Esophagus muscularis mucosa (tissue), 4 donors: ENCODE measurements at regions of chr12 and their contacts with region 1.

Region 1: GRCh38 chr12:104108755-104109445 is 29.1 kb downstream of the NFYB start:
- DNase-seq: peak; percentile 96
- H3K4me3 ChIP-seq: no peak overlapping the region
- H3K27ac ChIP-seq: peak overlapping the region in 1 of 4 donors; percentile 0
- H3K4me1 ChIP-seq: peaks cover 0 to 22% (median 17%) of the 10 kb centered on the region in 4 donors
- H3K27me3 ChIP-seq: no peaks in the 10 kb centered on the region
- CTCF ChIP-seq: peak; percentile 85 to 95 (median 87)
- EP300 ChIP-seq: no peak
- POLR2A ChIP-seq: no peak

Region 2: DNA sequence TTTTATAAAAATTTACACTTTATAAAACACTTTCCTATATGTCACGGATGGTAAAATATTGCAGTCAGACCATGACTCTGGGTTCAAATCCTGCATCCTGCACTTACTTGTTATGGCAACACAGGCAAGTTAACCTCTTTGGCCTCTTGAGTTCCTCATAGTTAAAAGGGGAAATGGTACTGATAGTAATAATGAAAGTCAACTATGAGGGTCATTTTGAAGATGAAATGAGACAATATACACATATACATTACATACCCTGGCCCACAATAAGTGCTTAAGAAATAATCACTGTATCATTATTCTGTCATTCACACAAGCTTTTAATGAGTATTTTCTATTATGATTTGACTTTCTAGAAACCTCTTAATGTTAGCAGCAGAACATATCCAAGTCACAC is 677.5 kb before region 1 on chr12:
- intact Hi-C with region 1: no loop called
- DNase-seq: no peak
- H3K4me3 ChIP-seq: no peak overlapping the region
- H3K27ac ChIP-seq: no peak overlapping the region
- H3K4me1 ChIP-seq: no peaks in the 10 kb centered on the region
- H3K27me3 ChIP-seq: no peaks in the 10 kb centered on the region
- CTCF ChIP-seq: no peak
- EP300 ChIP-seq: no peak
- POLR2A ChIP-seq: no peak

Region 3: DNA sequence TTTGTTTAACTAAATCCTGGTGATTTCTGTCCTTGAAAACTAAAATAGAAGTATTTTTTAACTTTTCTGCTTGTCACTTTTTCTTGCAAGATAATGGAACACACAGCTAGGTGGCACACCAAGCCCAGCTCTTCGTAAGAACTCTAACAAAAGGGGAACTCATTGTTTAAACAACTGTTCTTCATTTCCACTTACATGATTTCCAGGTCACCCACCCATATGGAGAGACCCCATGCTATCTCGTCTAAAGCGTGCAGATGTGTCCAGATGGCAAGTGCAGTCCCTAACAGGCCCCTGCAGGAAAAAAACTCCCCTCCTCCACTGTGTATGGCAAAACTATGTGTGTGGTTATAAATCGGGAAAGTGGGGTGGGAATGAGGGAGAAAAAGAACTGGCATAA is 224.6 kb before region 1 on chr12:
- intact Hi-C with region 1: loop called (anchors 10 kb)
- DNase-seq: no peak
- H3K4me3 ChIP-seq: no peak overlapping the region
- H3K27ac ChIP-seq: no peak overlapping the region
- H3K4me1 ChIP-seq: no peaks in the 10 kb centered on the region
- H3K27me3 ChIP-seq: no peaks in the 10 kb centered on the region
- CTCF ChIP-seq: peak; percentile 19 to 37 (median 25)
- EP300 ChIP-seq: no peak
- POLR2A ChIP-seq: no peak

Region 4: DNA sequence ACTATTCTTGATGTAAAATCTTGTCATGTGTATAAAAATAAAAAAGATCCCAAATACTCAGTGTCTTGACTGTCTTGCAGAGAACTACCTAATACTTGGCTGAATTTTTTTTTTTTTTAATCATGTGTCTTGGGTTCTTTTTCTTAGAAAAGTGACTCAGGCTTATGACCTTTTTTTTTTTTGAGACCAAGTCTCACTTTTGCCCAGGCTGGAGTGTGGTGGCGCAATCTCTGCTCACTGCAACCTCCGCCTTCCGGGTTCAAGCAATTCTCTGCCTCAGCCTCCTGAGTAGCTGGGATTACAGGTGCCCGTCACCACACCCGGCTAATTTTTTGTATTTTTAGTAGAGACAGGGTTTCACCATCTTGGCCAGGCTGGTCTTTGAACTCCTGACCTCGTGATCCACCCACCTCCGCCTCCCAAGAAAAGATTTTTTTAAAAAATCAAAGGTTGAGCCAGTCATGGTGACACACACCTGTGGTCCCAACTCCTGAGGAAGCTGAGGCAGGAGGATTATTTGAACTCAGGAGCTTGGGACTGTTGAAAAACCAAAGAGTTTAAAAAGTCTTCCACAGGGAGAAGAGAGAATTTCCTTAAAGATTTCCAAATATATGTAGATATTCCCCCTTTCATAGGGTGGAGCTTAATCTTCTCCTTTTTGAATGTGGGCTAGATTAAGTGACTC is 160.9 kb before region 1 on chr12:
- intact Hi-C with region 1: loop called (anchors 5 kb)
- DNase-seq: no peak
- H3K4me3 ChIP-seq: no peak overlapping the region
- H3K27ac ChIP-seq: no peak overlapping the region
- H3K4me1 ChIP-seq: no peaks in the 10 kb centered on the region
- H3K27me3 ChIP-seq: no peaks in the 10 kb centered on the region
- CTCF ChIP-seq: no peak
- EP300 ChIP-seq: no peak
- POLR2A ChIP-seq: no peak

Region 5: GRCh38 chr12:104057771-104058197 is 51.1 kb before region 1 on chr12:
- intact Hi-C with region 1: loop called (anchors 2 kb)
- DNase-seq: no peak
- H3K4me3 ChIP-seq: no peak overlapping the region
- H3K27ac ChIP-seq: no peak overlapping the region
- H3K4me1 ChIP-seq: peaks cover 19 to 21% (median 19%) of the 10 kb centered on the region in 4 donors
- H3K27me3 ChIP-seq: no peaks in the 10 kb centered on the region
- CTCF ChIP-seq: peak; percentile 53 to 71 (median 54)
- EP300 ChIP-seq: no peak
- POLR2A ChIP-seq: no peak

Region 6: GRCh38 chr12:104263580-104264358 is 154.9 kb after region 1 on chr12:
- intact Hi-C with region 1: no loop called
- DNase-seq: no peak
- H3K4me3 ChIP-seq: no peak overlapping the region
- H3K27ac ChIP-seq: no peak overlapping the region
- H3K4me1 ChIP-seq: no peaks in the 10 kb centered on the region
- H3K27me3 ChIP-seq: no peaks in the 10 kb centered on the region
- CTCF ChIP-seq: no peak
- EP300 ChIP-seq: no peak
- POLR2A ChIP-seq: no peak